ENCODE measurements at regions of chr11 and their contacts with region 1.

Region 1: GRCh38 chr11:85854557-85855340 is 434 bp upstream of the CCDC83 start:
- DNase-seq: peak; percentile 81 to 98 (median 86)

Region 2: DNA sequence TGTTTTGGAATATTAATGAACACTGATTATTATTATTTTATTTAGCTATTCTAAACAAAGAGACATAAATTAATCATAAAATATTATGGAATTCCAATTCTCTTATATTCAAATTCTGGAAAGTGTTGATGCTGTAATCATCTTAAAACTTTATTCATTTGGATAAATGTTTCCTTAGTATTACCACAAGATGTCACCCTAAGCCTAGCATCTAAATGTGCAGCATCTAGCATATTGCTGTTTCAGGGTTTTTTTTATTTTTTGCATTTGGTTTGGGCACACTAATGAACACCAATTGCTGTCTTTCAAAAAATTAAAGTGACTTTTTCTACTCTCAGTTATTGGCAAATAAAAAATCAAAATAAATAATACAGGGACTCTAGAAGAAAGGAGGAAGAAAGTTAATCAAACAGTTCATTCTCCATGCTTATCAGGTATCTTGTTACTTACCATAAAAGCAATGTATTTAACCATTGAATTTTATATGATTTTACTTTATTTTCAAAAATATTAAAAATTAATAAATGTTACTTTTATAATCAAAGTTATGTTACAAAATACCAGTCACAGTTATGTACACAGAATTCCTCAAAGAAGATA is 259.4 kb before region 1 on chr11:
- intact Hi-C with region 1: no loop called
- DNase-seq: no peak

Region 3: DNA sequence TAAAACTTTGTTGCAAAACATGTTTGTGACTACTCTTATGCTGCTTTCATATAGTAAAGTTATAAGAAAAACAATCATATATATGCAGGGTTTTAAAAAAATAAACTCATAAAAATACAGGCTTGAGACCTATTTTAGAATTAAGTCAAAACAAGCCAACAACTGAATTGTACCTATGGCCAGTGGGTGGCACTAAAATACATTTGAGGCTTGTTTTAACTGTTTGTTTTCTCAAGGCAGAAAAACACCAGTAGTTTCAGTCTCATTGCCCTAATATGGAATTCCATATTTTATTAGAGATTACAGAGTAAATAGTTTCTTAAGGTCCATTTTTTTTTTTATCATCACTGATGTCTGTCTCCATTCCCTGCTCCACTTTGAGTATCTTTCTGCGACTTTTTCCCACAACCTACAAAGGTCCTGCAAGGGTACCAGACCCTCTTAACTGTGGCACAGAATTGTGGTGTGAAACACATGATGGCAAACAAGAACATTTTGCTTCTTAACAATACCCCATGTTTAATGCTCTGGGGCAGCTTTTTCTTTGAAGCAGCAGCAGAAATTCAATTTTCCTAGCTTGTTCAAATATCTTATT is 160.3 kb before region 1 on chr11:
- intact Hi-C with region 1: loop called (anchors 2 kb)
- DNase-seq: peak in 1 of 10 donors; percentile 20

Region 4: GRCh38 chr11:85947431-85948272 is 92.9 kb after region 1 on chr11:
- intact Hi-C with region 1: loop called (anchors 5 kb)
- DNase-seq: no peak

Region 5: DNA sequence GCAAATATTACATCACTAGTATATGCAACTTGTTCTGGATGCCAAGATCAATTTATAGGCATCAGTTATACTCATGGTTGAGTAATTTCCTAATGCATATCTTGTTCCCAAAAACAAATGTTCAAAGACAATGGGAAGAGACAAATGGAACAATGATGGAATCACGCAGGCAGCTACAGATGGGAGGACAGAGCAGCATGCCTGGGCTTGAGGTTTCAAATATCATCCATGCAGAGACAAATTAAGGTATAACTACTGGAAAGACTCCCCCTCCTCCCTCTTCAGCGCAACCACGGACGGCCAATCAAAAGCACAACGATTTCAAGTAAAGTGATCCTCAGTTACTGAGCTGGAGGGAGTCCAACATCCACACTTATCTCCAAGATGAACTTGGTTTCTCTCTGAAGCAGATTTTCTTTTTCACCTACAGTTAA is 107.2 kb after region 1 on chr11:
- intact Hi-C with region 1: no loop called
- DNase-seq: no peak

Region 6: DNA sequence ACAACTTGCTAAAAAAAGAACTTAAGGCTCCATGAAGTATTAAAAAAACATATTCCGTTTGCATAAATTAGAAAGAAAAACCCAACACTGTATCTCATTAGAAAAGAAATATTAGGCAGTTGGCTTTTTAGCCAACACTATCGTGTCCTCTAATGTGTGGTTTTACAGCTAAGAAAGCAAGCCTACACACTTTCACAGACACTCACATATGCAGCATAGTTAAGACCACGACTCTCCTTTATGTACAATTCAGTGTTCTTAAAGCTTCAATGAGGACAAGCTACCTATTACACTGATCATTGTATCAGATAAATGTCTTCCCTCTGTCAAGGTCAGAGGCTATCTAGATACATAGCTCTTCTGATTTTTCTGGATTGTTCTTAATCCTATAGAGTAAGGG is 134.0 kb after region 1 on chr11:
- intact Hi-C with region 1: no loop called
- DNase-seq: no peak

Region 7: DNA sequence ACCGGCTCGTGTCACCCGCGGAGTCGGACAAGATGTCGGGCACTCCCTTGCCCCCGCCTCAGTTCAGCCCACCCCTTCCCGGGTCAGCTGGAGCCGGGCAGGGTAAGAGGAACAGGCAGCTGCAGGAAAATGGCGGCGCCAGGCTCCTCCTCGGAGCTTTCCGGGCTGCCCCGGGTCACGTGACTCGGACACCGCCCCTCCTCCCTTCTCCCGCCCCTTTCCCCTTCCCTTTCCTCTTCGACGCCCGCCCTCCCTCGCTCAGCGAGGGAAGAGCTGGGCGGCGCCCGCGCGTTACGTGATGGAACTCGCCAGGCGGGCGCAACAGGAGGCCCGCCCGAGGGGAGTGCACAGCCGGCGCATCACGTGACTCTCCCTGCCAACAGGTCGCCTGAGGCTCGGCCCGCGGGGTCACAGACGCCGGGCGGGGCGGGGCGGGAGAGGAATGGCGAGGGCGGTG is 214.2 kb after region 1 on chr11 and contains the start of gene PICALM:
- intact Hi-C with region 1: loop called (anchors 10 kb)
- DNase-seq: peak; percentile 96 to 100 (median 98)

Region 8: DNA sequence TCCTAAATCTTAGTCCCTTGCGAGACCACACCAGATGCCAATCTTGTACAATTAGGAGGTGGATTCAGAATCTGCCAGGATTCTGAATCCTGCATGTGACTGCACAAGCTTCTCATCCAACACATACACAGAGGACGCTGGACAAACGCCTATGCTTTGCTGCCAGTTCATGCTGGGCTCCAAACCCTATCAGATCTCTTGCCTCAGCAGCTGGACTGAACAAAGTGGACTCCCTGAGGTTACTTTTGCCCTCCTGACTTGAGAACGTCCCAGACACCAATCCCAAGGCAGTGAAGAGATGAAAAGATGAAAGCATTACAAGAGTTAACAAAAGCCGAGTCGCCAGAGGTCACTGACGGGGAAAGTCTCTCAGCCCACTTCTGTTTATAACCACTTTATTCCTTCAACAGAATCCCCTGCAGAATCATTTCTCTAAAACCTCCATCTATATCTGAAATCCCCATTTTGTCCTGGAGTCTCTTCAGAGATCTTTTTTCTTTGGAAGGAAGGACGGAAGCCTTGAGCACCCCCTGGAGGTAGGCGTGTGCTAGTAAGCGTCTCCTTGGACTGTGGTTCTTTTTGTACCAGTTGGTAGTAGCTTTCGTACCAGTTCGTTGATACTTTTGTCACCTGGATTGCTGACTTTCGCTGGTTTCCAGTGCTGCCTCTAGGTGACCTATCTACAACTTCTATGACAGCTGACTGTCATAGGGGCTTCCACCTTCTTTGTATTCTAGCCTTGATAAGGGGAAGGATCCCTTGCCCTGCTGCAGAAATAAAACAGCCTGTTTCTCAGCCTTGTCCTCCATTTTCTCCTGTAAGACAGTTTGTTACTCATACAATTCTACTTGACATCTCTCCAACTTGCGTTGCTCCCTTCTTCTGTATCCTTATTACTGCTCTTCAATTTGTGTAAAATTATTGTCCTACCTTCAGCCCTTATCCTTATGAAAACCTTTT is 363.7 kb after region 1 on chr11:
- intact Hi-C with region 1: loop called (anchors 10 kb)
- DNase-seq: peak in 8 of 10 donors; percentile 19 to 93 (median 64)

Region 9: GRCh38 chr11:86291466-86292262 is 436.9 kb after region 1 on chr11:
- intact Hi-C with region 1: loop called (anchors 5 kb)
- DNase-seq: peak in 6 of 10 donors; percentile 17 to 79 (median 41)

Region 10: GRCh38 chr11:86818466-86819192 is 963.9 kb after region 1 on chr11:
- intact Hi-C with region 1: loop called (anchors 10 kb)
- DNase-seq: no peak